PC-3 (cell line): ENCODE measurements at regions of chrX and their contacts with region 1.

Region 1: GRCh38 chrX:131802835-131803626 is 220.1 kb upstream of the STK26 start:
- DNase-seq: peak; percentile 63
- ATAC-seq: peak; percentile 95
- H3K4me3 ChIP-seq: peak overlapping the region; percentile 50
- H3K27ac ChIP-seq: no peak overlapping the region
- H3K4me1 ChIP-seq: no peaks in the 10 kb centered on the region
- H3K27me3 ChIP-seq: no peaks in the 10 kb centered on the region
- CTCF ChIP-seq: peak; percentile 83

Region 2: DNA sequence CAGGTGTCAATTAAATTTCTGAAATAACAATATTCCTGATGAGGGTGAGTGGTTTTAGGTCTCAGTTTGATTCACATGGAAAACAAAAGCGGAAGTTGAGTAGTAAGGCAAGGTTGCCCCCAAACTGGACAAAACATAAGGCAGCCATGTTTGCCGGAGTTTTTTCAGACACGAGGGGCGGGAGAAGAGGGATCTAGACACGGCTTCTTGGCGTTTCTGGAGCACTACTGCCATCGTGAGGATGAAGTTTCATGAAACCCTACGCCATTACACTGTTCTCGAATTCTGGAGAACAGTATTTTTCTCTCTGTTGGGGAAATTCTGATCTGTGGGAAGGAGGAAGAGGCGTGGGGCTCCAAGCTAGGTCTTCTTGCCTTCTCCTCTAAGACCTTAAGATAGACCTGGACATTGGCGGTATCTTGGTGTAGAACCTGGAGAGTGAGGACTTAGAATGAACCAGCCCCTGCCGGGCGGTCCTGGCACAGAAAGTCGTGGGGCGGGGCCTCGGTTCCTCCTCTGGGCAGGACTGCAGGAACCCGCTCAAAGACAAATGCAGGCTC is 98.8 kb before region 1 on chrX:
- CTCF ChIA-PET with region 1: no interaction called
- POLR2A ChIA-PET with region 1: no interaction called
- intact Hi-C with region 1: no loop called
- DNase-seq: peak; percentile 37
- ATAC-seq: no peak; the same call in 1 of the 2 replicates
- H3K4me3 ChIP-seq: no peak overlapping the region
- H3K27ac ChIP-seq: no peak overlapping the region
- H3K4me1 ChIP-seq: no peaks in the 10 kb centered on the region
- H3K27me3 ChIP-seq: no peaks in the 10 kb centered on the region
- CTCF ChIP-seq: no peak; the same call in 1 of the 2 replicates

Region 3: GRCh38 chrX:131752489-131753198 is 50.4 kb before region 1 on chrX:
- CTCF ChIA-PET with region 1: no interaction called
- POLR2A ChIA-PET with region 1: no interaction called
- intact Hi-C with region 1: loop called (anchors 1 kb)
- DNase-seq: peak; percentile 60
- ATAC-seq: peak; percentile 50
- H3K4me3 ChIP-seq: peak overlapping the region; percentile 60
- H3K27ac ChIP-seq: 0 out of 2 replicates have a peak overlapping the region, but pooled peaks have one; percentile 16
- H3K4me1 ChIP-seq: no peaks in the 10 kb centered on the region; the same call in 1 of the 2 replicates
- H3K27me3 ChIP-seq: no peaks in the 10 kb centered on the region
- CTCF ChIP-seq: no peak

Region 4: DNA sequence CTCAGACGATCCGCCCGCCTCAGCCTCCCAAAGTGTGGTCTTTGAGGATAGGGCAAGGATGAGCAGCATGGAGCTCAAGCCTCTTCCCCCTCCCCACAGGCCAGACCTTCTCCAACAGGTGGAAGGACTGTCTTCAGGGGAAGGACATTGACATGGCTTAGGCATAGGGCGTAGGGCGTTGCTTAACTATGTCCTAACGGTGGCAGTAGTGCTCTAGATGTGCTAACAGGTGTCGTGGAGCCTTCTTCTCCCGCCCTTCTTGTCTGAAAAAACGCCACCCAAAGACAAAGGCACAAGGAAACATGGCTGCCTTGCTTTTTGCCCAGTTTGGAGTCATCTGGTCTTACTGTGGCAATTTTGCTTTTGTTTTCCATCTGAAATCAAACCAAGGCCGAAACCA is 39.4 kb before region 1 on chrX:
- CTCF ChIA-PET with region 1: no interaction called
- POLR2A ChIA-PET with region 1: no interaction called
- intact Hi-C with region 1: loop called (anchors 2 kb)
- DNase-seq: peak; percentile 57
- ATAC-seq: peak; percentile 83
- H3K4me3 ChIP-seq: no peak overlapping the region
- H3K27ac ChIP-seq: no peak overlapping the region
- H3K4me1 ChIP-seq: no peaks in the 10 kb centered on the region
- H3K27me3 ChIP-seq: no peaks in the 10 kb centered on the region
- CTCF ChIP-seq: 0 out of 2 replicates have a peak, but pooled peaks have one; percentile 34

Region 5: GRCh38 chrX:131816551-131817136 is 13.6 kb after region 1 on chrX:
- CTCF ChIA-PET with region 1: interaction called, 3 read pairs
- POLR2A ChIA-PET with region 1: no interaction called
- intact Hi-C with region 1: loop called (anchors 1 kb)
- DNase-seq: peak; percentile 83
- ATAC-seq: peak; percentile 57
- H3K4me3 ChIP-seq: peak overlapping the region; percentile 44
- H3K27ac ChIP-seq: peak overlapping the region; percentile 36
- H3K4me1 ChIP-seq: peaks cover 9% of the 10 kb centered on the region; the same call in 1 of the 2 replicates
- H3K27me3 ChIP-seq: no peaks in the 10 kb centered on the region
- CTCF ChIP-seq: peak; percentile 71